ENCODE measurements at regions of chr11 and their contacts with region 1.

Region 1: DNA sequence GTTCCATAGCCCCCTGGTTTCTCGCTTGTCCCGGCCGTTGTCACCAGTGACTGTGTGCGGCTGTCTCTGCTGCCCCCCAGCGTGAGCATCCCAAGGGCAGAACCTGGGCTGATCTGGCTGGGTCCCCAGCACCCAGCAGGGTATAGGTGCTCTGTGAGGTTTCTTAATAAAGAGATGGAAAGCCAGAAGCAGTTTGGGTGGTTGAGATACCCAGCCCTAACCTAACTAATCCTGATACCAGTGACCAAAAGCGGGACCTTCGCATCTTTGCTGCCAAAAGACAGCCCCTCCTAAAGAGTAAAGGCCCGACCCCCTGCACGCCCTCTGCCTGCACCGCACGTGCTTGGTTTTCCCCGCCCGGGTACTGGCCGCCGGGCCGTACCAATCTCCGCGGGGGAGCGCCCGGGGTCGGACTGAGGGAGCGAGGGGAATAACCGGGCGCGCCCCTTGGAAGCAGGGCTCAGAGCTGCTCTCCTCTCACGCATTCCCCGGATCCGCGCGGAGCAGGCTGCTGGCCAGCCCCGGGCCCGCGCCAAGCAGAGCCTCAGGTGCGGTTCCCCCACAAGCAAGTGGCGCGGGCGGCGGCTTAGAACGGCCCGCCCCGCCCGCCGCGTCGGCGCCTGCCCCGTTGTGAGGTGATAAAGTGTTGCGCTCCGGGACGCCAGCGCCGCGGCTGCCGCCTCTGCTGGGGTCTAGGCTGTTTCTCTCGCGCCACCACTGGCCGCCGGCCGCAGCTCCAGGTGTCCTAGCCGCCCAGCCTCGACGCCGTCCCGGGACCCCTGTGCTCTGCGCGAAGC is at the start of gene DGAT2:
- DNase-seq: peak; percentile 95
- ATAC-seq: peak; percentile 92
- total RNA-seq, gene DGAT2: 25.5 TPM

Region 2: DNA sequence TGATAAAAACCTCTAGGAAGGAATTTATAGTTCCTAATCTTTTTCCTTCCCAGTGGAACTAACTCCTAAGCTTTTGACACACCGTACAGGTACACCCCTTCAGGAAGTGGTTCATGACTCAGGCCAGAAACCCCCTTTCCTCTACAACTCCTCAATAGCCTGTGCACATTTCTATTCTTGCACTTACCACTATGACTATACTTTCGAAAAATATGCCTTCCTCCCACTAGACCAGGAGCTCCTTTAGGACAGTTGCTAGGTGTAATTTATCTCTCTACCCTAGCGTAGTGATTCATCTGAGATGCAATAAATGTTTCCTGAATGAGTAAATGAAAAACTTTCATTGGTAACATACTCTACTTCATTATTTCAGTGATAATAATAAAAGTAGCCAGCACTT is 114.0 kb before region 1 on chr11:
- intact Hi-C with region 1: no loop called
- DNase-seq: no peak
- ATAC-seq: no peak

Region 3: DNA sequence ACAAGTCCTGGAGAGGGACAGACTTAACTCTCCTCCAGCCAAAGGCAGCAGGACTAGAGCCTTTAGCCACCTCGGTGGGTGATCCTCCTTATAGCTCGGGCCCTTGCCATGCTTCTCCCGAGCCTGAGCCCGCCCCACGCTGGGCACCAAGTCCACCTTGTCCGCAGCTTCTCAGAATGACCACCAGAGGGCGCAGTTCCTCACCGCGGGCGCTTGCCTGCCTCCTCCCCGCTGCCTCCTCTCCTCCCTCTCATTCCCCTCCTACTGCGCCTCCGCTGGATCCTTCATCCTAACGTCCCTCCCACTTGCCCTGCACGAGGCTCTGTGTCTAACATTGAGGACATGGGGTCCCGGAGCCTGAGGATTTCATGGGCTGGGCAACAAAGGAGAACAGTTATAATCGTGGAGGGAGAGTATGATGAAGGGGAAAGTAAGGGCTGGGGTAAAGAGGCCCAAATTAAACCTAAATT is 62.0 kb before region 1 on chr11:
- intact Hi-C with region 1: loop called (anchors 1 kb)
- DNase-seq: peak; percentile 89
- ATAC-seq: peak; percentile 91

Region 4: DNA sequence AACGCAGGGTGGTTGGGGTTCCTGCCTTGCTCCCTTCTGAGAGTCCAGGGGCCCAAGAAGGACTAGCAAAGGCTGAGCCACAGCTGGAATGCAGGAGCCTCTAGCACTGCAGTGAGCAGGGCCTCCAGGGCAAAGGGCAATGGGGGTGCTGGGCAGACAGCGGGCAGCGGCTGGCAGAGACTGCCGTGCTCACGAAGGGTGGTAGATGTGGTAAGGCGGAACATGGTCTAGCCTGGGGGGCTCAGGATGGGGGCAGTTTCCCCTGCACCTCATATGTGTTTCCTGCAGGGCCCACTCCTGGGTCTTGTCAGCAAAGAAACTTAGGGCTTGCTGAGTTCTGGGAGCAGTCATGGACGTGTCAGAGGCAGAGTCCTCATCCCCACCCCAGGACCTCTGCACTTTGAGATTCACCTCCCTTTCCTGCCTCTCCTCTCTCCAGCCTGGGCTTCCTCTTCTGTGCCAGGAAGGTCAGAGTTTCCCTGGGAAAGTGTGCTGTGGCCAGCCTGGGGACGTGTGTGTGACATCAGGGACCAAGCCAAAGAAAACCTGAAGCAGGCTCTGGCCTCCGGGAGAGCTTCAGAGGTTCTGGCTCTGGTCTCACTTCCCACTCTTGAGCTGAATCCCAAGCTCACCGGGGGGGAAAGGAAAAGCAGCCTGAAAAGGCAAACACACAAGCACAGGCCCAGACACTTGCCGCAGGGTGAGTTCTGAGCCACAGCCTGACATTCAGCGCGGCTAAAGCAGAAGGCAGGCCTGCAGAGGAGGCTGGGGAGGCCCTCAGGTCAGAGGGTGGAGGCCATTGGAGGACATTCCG is 46.2 kb before region 1 on chr11:
- intact Hi-C with region 1: loop called (anchors 1 kb)
- DNase-seq: peak; percentile 58
- ATAC-seq: no peak